Ascending aorta (tissue), 2 donors: ENCODE measurements at regions of chr4 and their contacts with region 1.

Region 1: GRCh38 chr4:176319704-176320339 is at the start of gene SPCS3:
- DNase-seq: peak; percentile 72 to 98
- H3K4me3 ChIP-seq: peak within 1 kb of the TSS; percentile 76 to 97
- H3K27ac ChIP-seq: peak within 1 kb of the TSS; percentile 94 to 97
- H3K4me1 ChIP-seq: peaks cover 3 to 22% of the 10 kb centered on the region in 2 donors
- H3K27me3 ChIP-seq: no peaks in the 10 kb centered on the region
- CTCF ChIP-seq: no peak
- total RNA-seq, gene SPCS3: 57.4 TPM

Region 2: GRCh38 chr4:175614890-175615289 is 704.9 kb before region 1 on chr4:
- intact Hi-C with region 1: no loop called
- DNase-seq: no peak
- H3K4me3 ChIP-seq: no peak overlapping the region
- H3K27ac ChIP-seq: no peak overlapping the region
- H3K4me1 ChIP-seq: no peaks in the 10 kb centered on the region
- H3K27me3 ChIP-seq: no peaks in the 10 kb centered on the region
- CTCF ChIP-seq: no peak

Region 3: GRCh38 chr4:176065435-176066291 is 254.2 kb before region 1 on chr4 and contains the start of gene WDR17:
- intact Hi-C with region 1: loop called (anchors 5 kb)
- DNase-seq: peak; percentile 69 to 94
- H3K4me3 ChIP-seq: peak within 1 kb of the TSS; percentile 63 to 70
- H3K27ac ChIP-seq: no peak within 1 kb of the TSS
- H3K4me1 ChIP-seq: no peaks in the 10 kb centered on the region
- H3K27me3 ChIP-seq: no peaks in the 10 kb centered on the region
- CTCF ChIP-seq: no peak
- total RNA-seq, gene WDR17: 3.4 TPM

Region 4: GRCh38 chr4:176238157-176238610 is 81.6 kb before region 1 on chr4:
- intact Hi-C with region 1: loop called (anchors 2 kb)
- DNase-seq: no peak
- H3K4me3 ChIP-seq: no peak overlapping the region
- H3K27ac ChIP-seq: peak overlapping the region; percentile 78 to 85
- H3K4me1 ChIP-seq: no peaks in the 10 kb centered on the region
- H3K27me3 ChIP-seq: no peaks in the 10 kb centered on the region
- CTCF ChIP-seq: no peak

Region 5: GRCh38 chr4:177441803-177442622 is 1122.2 kb after region 1 on chr4 and contains the start of gene AGA:
- intact Hi-C with region 1: loop called (anchors 5 kb)
- DNase-seq: peak; percentile 88 to 98
- H3K4me3 ChIP-seq: peak within 1 kb of the TSS; percentile 60 to 83
- H3K27ac ChIP-seq: peak within 1 kb of the TSS; percentile 89 to 92
- H3K4me1 ChIP-seq: peaks cover 3 to 4% of the 10 kb centered on the region in 2 donors
- H3K27me3 ChIP-seq: no peaks in the 10 kb centered on the region
- CTCF ChIP-seq: no peak
- total RNA-seq, gene AGA: 4.5 TPM